Lower leg skin (tissue), 4 donors: ENCODE measurements at regions of chr14 and their contacts with region 1.

Region 1: DNA sequence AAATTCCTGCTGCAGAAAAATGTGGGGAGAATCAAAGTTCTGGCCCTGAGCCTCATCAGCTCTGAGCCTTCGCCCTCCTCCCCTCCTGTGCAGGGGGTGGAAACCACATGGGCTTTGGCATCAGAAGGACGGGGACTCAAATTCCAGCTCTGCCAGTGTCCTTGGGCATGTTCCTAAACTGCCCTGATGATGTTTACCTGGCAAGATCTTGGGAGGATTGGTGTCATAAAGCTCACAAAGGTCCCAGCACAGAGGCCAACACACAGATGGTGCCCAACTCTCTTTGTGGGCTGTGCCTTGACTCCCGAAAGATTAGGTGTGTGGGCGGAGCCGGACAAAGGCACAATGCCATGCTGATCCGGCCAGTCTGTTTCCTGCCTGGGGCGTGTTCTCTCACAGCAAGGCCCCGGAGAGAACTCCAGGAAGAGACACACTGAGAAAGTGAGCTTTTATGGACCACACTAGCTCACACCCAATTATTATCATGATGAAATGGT is 20.5 kb upstream of the CLMN start:
- DNase-seq: no peak
- H3K4me3 ChIP-seq: no peak overlapping the region
- CTCF ChIP-seq: no peak
- POLR2A ChIP-seq: no peak

Region 2: DNA sequence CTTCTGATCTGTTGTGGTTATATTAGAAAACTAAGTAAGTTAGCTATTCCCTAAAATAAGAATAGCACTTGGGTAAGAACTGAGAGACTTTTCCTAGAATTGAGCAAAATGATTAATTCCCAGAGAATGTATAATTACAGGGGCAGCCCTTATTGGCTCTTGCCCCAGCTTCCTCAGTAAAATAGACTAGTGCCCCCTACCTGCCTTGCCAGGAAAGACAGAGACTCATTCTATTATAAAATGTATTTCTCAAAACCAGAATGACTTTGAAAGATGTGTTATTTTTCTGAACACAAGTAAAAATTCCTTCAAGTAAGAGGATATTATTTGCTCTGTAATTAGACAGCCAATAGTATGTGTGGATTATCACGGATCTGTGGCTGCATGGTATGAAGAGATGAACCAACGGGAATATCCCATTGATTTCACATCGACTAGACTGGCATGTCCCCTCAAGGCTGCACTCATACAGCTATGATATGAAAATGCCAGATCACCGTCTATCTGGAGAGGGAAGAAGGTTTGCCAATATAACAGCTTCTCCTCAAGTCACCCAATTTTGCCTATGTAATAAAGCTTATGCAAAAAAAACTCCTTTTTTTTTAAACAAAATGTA is 187.2 kb after region 1 on chr14:
- intact Hi-C with region 1: no loop called
- DNase-seq: peak; percentile 69 to 90
- H3K4me3 ChIP-seq: no peak overlapping the region
- CTCF ChIP-seq: peak in 1 of 3 donors; percentile 87
- POLR2A ChIP-seq: no peak

Region 3: DNA sequence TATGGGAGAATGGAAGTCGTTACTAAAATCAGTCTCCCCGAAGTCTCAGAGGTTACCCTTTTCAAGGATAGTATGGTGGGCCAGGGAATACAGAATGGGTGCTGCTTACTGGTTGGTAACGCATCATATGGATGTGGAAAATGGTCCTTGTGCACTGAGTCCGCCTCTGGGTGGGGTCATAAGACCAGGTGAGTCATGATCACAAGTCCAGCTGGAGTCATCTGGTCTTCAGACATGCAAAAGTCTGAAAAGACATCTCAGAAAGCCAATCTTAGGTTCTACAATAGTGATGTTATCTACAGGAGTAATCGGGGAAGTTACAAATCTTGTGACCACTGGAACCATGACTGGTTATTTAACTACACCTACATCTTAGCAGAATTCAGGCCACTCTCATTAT is 274.1 kb after region 1 on chr14:
- intact Hi-C with region 1: loop called (anchors 5 kb)
- DNase-seq: no peak
- H3K4me3 ChIP-seq: no peak overlapping the region
- CTCF ChIP-seq: no peak
- POLR2A ChIP-seq: no peak

Region 4: DNA sequence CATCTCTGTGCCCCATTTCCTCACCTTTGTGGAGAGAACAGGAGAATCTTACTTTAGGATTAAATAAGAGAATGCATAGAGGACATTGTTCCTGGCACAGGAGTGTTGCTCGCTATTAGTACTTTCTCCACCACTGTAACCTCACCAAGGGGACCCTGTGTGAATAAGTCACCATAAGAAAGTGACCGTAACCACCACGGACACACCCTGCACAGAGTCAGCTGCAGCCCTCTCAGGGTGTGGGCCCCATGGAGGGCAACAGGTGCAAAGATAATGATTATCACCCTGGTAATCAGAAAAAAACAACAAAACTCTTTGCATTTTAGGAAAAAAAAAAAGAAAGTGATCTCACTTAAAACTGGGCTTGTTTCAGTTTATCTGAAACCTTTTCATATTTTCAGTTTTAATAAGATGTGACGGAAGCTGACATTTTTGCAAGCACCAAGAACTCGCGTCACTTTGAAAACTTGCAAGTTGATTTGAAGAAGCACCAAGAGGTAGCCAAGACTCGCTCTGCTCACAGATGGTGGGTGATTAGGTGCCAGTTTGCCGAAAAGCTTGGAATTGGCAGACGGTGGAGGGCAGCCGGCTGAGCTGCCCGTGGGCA is 1369.9 kb after region 1 on chr14:
- intact Hi-C with region 1: no loop called
- DNase-seq: no peak
- H3K4me3 ChIP-seq: no peak overlapping the region
- CTCF ChIP-seq: no peak
- POLR2A ChIP-seq: no peak